ENCODE measurements at regions of chr17 and their contacts with region 1.

Region 1: DNA sequence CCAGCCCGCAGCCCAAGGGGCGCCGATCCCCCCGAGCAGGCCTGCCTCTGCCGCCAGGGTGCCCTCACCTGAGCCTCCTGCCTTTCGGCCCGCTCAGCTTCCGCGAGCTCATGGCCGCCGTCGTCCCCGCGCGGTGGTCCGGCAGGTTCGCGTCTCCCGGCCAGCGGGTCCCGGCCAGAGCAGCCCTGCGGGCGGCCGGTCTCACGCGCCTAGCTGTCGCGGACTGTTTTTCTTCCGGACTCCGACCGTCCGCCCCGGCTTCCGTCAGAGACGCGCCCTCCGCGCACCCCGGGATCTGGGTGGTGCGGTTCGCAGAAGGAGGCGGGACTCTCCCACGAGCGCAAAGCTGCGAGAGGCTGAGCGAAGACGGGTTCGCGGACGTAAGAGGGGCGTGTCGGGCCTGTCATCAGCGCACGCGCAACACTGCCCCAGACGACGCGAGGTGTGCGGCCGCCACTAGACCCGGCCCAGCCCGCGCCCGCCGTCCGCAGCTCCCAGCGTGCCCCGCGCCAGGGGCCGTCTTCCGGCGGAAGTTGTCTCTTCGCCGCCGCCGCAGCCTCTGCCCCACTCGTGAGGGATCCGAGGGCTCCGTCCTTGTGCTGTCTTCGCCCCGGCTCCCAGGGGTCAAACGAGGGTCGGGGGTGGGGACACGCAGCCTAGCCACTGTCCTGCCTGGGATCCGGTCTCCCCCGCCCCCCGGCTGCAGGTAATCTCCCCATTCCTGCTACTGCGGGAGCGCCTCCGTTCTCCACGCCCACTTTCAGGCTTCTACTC is at the start of gene INPP5K:
- DNase-seq: peak; percentile 98
- ATAC-seq: peak; percentile 96 to 99 (median 97)
- H3K4me3 ChIP-seq: peak within 1 kb of the TSS; percentile 81 to 100 (median 94)
- H3K27ac ChIP-seq: peak within 1 kb of the TSS; percentile 86 to 97 (median 92)
- H3K4me1 ChIP-seq: peaks cover 18 to 59% (median 50%) of the 10 kb centered on the region in 9 donors
- H3K27me3 ChIP-seq: no peaks in the 10 kb centered on the region
- CTCF ChIP-seq: peak in 1 of 9 donors; percentile 14
- total RNA-seq, gene INPP5K: 26.8 to 41.2 (median 32.7) TPM

Region 2: DNA sequence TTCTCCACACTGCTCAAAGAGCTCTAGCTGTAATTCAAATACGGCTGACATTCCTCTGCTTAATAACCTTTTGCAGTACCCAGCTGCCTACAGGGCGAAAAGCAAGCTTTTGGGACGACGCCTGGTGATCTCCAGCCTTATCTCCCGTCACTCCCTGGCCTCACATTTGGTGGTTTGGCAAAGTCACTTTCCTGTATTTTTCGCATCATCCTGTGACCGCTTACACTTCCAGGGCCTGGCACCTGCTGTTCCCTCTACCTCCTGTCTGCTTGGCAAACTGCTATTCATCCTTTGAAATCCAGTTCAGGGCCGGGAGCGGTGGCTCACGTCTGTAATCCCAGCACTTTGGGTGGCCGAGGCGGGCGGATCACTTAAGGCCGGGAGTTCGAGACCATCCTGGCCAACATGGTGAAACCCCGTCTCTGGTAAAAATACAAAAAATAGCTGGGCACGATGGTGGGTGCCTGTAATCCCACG is 249.1 kb before region 1 on chr17:
- intact Hi-C with region 1: loop called in 5 of 10 experiments (anchors 5 to 10 kb)
- DNase-seq: peak in 1 of 2 donors; percentile 34
- ATAC-seq: peak in 7 of 8 donors; percentile 10 to 64 (median 38)
- H3K4me3 ChIP-seq: peak overlapping the region; percentile 54 to 81 (median 72)
- H3K27ac ChIP-seq: peak overlapping the region; percentile 76 to 96 (median 94)
- H3K4me1 ChIP-seq: peaks cover 0 to 26% (median 12%) of the 10 kb centered on the region in 9 donors
- H3K27me3 ChIP-seq: peaks cover 11 to 41% (median 30%) of the 10 kb centered on the region in 7 donors
- CTCF ChIP-seq: no peak

Region 3: GRCh38 chr17:1340371-1340770 is 176.2 kb before region 1 on chr17:
- intact Hi-C with region 1: loop called in 2 of 10 experiments (anchors 5 kb)
- DNase-seq: no peak
- ATAC-seq: no peak
- H3K4me3 ChIP-seq: no peak overlapping the region
- H3K27ac ChIP-seq: no peak overlapping the region
- H3K4me1 ChIP-seq: peaks cover 0 to 29% (median 8%) of the 10 kb centered on the region in 9 donors
- H3K27me3 ChIP-seq: no peaks in the 10 kb centered on the region
- CTCF ChIP-seq: no peak

Region 4: DNA sequence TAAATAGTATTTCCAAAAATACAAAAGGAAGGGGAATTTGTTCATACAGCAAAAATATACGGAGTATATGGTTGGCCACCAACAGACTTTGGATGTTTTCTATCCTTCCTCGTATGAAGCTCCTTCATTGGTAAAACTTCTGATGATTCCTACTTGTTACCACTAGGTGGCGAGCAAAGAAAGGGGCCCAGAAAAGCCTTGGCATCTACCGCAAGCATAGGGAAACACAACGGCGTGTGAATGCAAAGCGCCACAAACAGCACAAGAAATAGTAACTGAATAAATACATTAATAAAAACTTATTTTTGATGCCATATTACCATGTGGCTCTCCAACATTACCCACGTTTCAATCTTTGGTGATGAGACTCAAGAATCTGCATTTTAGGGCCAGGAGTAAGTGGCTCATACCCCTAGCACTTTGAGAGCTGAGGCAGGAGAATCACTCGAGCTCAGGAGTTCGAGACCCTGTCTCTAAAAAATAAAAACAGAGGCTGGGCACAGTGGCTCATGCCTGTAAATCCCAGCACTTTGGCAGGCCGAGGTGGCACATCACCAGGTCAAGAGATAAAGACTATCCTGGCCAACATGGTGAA is 151.0 kb before region 1 on chr17:
- intact Hi-C with region 1: loop called (anchors 1 to 10 kb)
- DNase-seq: peak in 1 of 2 donors; percentile 68
- ATAC-seq: peak in 7 of 8 donors; percentile 48 to 81 (median 73)
- H3K4me3 ChIP-seq: peak overlapping the region in 3 of 10 donors; percentile 8 to 9 (median 9)
- H3K27ac ChIP-seq: peak overlapping the region in 5 of 10 donors; percentile 5 to 42 (median 9)
- H3K4me1 ChIP-seq: peaks cover 16 to 99% (median 86%) of the 10 kb centered on the region in 9 donors
- H3K27me3 ChIP-seq: no peaks in the 10 kb centered on the region
- CTCF ChIP-seq: peak; percentile 81 to 93 (median 87)

Region 5: DNA sequence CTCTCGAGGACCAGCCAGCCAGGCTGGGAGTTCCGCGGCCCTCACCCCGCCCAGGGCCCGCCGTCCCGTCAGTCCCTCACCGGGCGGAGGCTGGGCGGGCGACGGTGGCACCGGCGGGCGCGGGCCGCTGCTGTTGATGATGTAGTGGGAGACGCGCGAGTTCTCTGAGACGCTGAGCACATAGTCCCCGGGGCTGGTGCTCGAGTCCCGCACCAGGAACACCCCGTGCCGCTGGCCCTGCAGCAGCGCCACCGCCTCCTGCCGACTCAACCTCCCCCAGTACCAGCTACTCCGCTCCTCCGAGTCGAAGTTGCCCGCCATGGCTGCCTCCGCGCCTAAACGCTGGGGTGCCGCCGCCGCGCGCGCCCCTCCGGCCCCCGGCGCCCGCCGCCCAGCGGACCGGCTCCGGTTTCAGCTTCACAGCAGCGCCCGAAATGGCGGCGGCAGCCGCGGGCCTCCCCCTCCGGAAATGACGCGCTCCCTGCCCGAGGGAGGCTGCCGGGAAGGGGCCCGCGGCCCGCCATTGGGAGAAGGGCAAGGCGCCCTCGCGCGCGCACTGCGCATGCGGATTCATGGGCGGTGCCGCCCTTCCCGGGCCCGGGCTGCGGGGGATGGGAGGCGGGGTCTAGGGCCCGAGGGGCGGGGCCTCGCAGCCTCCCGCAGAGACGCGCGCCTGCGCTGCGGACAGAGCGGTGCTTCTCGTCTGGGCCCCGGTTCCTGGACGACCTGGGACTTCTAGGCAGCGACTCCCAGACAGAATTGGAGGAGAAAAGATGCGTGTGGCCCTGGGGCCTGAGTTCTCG is 60.6 kb before region 1 on chr17 and contains the start of gene CRK:
- intact Hi-C with region 1: loop called in 6 of 10 experiments (anchors 2 to 10 kb)
- DNase-seq: peak; percentile 96 to 99
- ATAC-seq: peak; percentile 92 to 97 (median 95)
- H3K4me3 ChIP-seq: peak within 1 kb of the TSS; percentile 73 to 100 (median 98)
- H3K27ac ChIP-seq: peak within 1 kb of the TSS; percentile 97 to 99 (median 98)
- H3K4me1 ChIP-seq: peaks cover 17 to 67% (median 55%) of the 10 kb centered on the region in 9 donors
- H3K27me3 ChIP-seq: peaks cover 0 to 4% (median 0%) of the 10 kb centered on the region in 7 donors
- CTCF ChIP-seq: peak in 2 of 9 donors; percentile 12 to 24
- total RNA-seq, gene CRK: 30.4 to 47.5 (median 37.9) TPM

Region 6: GRCh38 chr17:1488030-1488863 is 28.3 kb before region 1 on chr17:
- intact Hi-C with region 1: loop called in 6 of 10 experiments (anchors 2 kb)
- DNase-seq: peak; percentile 91
- ATAC-seq: peak; percentile 59 to 75 (median 67)
- H3K4me3 ChIP-seq: peak overlapping the region; percentile 29 to 78 (median 72)
- H3K27ac ChIP-seq: peak overlapping the region; percentile 90 to 100 (median 98)
- H3K4me1 ChIP-seq: peaks cover 25 to 85% (median 74%) of the 10 kb centered on the region in 9 donors
- H3K27me3 ChIP-seq: peaks cover 0 to 48% (median 0%) of the 10 kb centered on the region in 7 donors
- CTCF ChIP-seq: peak in 3 of 9 donors; percentile 8 to 18 (median 14)